IMR-90 (cell line): ENCODE measurements at regions of chr9 and their contacts with region 1.

Region 1: GRCh38 chr9:100379862-100380261 is 27.1 kb upstream of the TEX10 start:
- DNase-seq: peak; percentile 77
- ATAC-seq: peak; percentile 93
- H3K4me3 ChIP-seq: no peak overlapping the region
- H3K27ac ChIP-seq: peak overlapping the region; percentile 73
- H3K4me1 ChIP-seq: peaks cover 6% of the 10 kb centered on the region; the same call in 1 of the 2 replicates
- H3K27me3 ChIP-seq: no peaks in the 10 kb centered on the region
- CTCF ChIP-seq: no peak
- POLR2A ChIP-seq: no peak
- RAD21 ChIP-seq: no peak

Region 2: GRCh38 chr9:100352727-100353505 is 26.9 kb before region 1 on chr9 and contains the start of gene TEX10:
- CTCF ChIA-PET with region 1: no interaction called
- POLR2A ChIA-PET with region 1: no interaction called
- dilution Hi-C with region 1: no loop called
- in situ Hi-C with region 1: no loop called
- intact Hi-C with region 1: loop called (anchors 1 kb)
- DNase-seq: peak; percentile 81
- ATAC-seq: peak; percentile 95
- H3K4me3 ChIP-seq: peak within 1 kb of the TSS; percentile 96
- H3K27ac ChIP-seq: peak within 1 kb of the TSS; percentile 87
- H3K4me1 ChIP-seq: no peaks in the 10 kb centered on the region; the same call in 1 of the 2 replicates
- H3K27me3 ChIP-seq: no peaks in the 10 kb centered on the region
- CTCF ChIP-seq: no peak
- POLR2A ChIP-seq: peak; percentile 87
- RAD21 ChIP-seq: no peak
- total RNA-seq, gene TEX10: 43.9 and 53.3 TPM in 2 replicates

Region 3: GRCh38 chr9:100411472-100412283 is 31.8 kb after region 1 on chr9:
- CTCF ChIA-PET with region 1: no interaction called
- POLR2A ChIA-PET with region 1: interaction called, 3 read pairs
- dilution Hi-C with region 1: no loop called
- in situ Hi-C with region 1: no loop called
- intact Hi-C with region 1: loop called (anchors 5 kb)
- DNase-seq: peak; percentile 85
- ATAC-seq: peak; percentile 100
- H3K4me3 ChIP-seq: peak overlapping the region; percentile 45
- H3K27ac ChIP-seq: peak overlapping the region; percentile 4; the same call in 1 of the 2 replicates
- H3K4me1 ChIP-seq: no peaks in the 10 kb centered on the region
- H3K27me3 ChIP-seq: no peaks in the 10 kb centered on the region; the same call in 1 of the 2 replicates
- CTCF ChIP-seq: no peak
- POLR2A ChIP-seq: peak; percentile 32; the same call in 1 of the 2 replicates
- RAD21 ChIP-seq: no peak